Heart left ventricle (tissue), 16 donors: ENCODE measurements at regions of chr17 and their contacts with region 1.

Region 1: GRCh38 chr17:17919169-17920107 is 52.8 kb downstream of the TOM1L2 start:
- DNase-seq: peak; percentile 74 to 83 (median 75)
- ATAC-seq: peak; percentile 54 to 78 (median 60)
- H3K4me3 ChIP-seq: no peak overlapping the region
- H3K27ac ChIP-seq: peak overlapping the region in 6 of 12 donors; percentile 15 to 88 (median 34)
- H3K4me1 ChIP-seq: peaks cover 0 to 58% (median 42%) of the 10 kb centered on the region in 12 donors
- H3K27me3 ChIP-seq: no peaks in the 10 kb centered on the region
- CTCF ChIP-seq: peak; percentile 60 to 82 (median 73)
- POLR2A ChIP-seq: no peak

Region 2: GRCh38 chr17:17675925-17676534 is 243.4 kb before region 1 on chr17:
- intact Hi-C with region 1: loop called in 7 of 10 experiments (anchors 2 to 10 kb)
- DNase-seq: no peak
- ATAC-seq: no peak
- H3K4me3 ChIP-seq: no peak overlapping the region
- H3K27ac ChIP-seq: no peak overlapping the region
- H3K4me1 ChIP-seq: peaks cover 0 to 34% (median 13%) of the 10 kb centered on the region in 12 donors
- H3K27me3 ChIP-seq: no peaks in the 10 kb centered on the region
- CTCF ChIP-seq: no peak
- POLR2A ChIP-seq: no peak

Region 3: DNA sequence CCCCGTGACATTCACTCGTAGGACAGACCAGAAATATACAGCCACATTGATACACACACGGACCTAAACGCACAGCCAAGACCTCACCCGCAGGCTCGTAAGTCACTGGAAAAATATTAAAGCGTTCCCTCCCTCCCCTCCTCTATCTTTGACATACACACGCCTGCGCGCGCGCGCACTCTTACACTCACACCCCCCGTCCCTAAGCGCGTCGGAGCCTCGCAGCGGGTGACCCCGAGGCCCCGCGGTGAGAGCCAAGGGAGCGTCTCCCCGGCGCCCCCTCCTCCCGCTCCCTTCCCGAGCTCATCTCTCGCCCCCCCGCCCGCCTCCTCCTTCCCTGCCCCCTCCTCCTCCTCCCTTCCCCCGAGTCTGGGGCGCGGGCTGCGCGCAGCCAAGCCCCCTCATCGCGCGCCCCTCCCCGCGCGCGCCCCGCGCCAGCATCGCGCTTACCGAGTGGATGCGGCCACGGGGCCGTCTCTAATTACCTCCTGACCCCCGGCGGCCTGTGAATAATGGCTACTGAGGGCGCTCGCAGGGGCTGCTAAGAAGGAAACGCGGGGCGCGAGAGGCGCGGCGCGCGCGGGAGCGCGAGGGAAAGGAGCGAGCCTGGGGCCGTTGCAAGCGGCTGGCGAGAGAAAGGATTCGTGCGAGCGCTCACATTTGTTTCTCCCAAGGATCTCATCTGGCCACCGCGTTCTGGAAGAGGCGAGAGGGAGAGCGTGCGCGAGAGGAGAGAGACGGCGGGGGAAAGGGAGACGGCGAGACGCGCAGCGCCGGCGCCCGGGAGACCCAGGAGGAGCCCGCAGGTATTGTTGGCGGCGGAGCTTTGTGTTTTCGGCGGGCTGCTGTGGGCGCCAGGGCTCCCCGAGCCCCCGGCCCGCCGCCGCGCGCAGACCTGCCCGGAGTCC is 195.8 kb before region 1 on chr17:
- intact Hi-C with region 1: no loop called
- DNase-seq: no peak
- ATAC-seq: peak in 2 of 4 donors; percentile 7 to 37
- H3K4me3 ChIP-seq: peak overlapping the region; percentile 19 to 73 (median 55)
- H3K27ac ChIP-seq: peak overlapping the region in 7 of 12 donors; percentile 5 to 78 (median 53)
- H3K4me1 ChIP-seq: peaks cover 0 to 65% (median 34%) of the 10 kb centered on the region in 12 donors
- H3K27me3 ChIP-seq: peaks cover 0 to 16% (median 0%) of the 10 kb centered on the region in 9 donors
- CTCF ChIP-seq: no peak
- POLR2A ChIP-seq: no peak

Region 4: DNA sequence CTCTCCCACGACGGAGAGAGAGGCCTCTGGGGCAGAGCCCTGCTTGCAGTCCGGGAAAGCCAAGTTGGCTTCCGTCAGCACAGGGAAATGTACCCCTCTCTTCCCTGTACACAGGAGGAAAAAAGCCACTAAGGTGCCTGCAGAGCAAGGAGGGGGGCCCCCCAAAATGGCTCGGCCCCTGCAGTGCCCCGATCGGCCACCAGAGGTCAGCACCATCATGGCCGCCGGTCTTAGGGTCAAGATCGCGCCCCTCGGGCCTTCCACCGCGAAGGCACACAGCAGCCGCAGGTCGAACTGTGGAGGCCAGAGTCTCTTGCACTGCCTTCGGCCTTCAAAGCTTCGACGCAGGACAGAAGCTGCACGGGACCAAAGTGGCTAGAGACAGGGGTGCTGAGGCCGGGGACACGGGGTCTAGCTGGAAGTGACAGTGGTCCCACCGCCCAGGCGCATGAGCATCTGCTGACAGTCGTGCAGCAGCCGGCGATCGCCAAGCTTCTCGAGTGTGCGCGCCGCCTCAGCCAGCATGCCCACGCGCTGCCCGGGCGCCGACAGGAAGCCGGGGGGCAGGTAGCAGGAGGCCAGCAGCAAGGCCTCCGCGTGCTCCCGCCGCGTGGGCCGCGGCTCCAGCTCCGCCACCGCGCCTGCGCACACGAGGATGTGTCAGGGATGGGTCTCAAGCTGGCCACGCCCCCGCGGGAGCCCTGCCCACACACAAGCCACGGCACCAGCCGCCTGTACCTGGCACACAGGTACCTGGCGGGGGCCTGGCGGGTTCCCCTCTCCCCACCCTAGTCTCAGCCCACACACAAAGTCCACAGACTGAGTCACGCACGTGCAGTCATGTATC is 107.0 kb before region 1 on chr17:
- intact Hi-C with region 1: loop called (anchors 2 to 10 kb)
- DNase-seq: peak; percentile 74 to 89 (median 77)
- ATAC-seq: peak; percentile 21 to 46 (median 40)
- H3K4me3 ChIP-seq: no peak overlapping the region
- H3K27ac ChIP-seq: peak overlapping the region in 6 of 12 donors; percentile 3 to 71 (median 21)
- H3K4me1 ChIP-seq: peaks cover 9 to 82% (median 30%) of the 10 kb centered on the region in 12 donors
- H3K27me3 ChIP-seq: no peaks in the 10 kb centered on the region
- CTCF ChIP-seq: peak in 11 of 12 donors; percentile 99 to 100 (median 100)
- POLR2A ChIP-seq: no peak

Region 5: GRCh38 chr17:17859909-17860765 is 59.3 kb before region 1 on chr17:
- intact Hi-C with region 1: loop called in 3 of 10 experiments (anchors 2 to 10 kb)
- DNase-seq: peak; percentile 79 to 91 (median 85)
- ATAC-seq: peak; percentile 93 to 98 (median 96)
- H3K4me3 ChIP-seq: no peak overlapping the region
- H3K27ac ChIP-seq: peak overlapping the region in 8 of 12 donors; percentile 21 to 60 (median 47)
- H3K4me1 ChIP-seq: peaks cover 0 to 34% (median 15%) of the 10 kb centered on the region in 12 donors
- H3K27me3 ChIP-seq: no peaks in the 10 kb centered on the region
- CTCF ChIP-seq: peak; percentile 95 to 99 (median 98)
- POLR2A ChIP-seq: no peak

Region 6: GRCh38 chr17:17877529-17878358 is 41.7 kb before region 1 on chr17:
- intact Hi-C with region 1: loop called in 5 of 10 experiments (anchors 5 kb)
- DNase-seq: peak; percentile 84 to 92 (median 85)
- ATAC-seq: peak; percentile 86 to 88 (median 88)
- H3K4me3 ChIP-seq: peak overlapping the region in 2 of 12 donors; percentile 8 to 21
- H3K27ac ChIP-seq: peak overlapping the region; percentile 71 to 98 (median 90)
- H3K4me1 ChIP-seq: peaks cover 16 to 66% (median 50%) of the 10 kb centered on the region in 12 donors
- H3K27me3 ChIP-seq: no peaks in the 10 kb centered on the region
- CTCF ChIP-seq: peak in 4 of 12 donors; percentile 21 to 39 (median 24)
- POLR2A ChIP-seq: no peak

Region 7: DNA sequence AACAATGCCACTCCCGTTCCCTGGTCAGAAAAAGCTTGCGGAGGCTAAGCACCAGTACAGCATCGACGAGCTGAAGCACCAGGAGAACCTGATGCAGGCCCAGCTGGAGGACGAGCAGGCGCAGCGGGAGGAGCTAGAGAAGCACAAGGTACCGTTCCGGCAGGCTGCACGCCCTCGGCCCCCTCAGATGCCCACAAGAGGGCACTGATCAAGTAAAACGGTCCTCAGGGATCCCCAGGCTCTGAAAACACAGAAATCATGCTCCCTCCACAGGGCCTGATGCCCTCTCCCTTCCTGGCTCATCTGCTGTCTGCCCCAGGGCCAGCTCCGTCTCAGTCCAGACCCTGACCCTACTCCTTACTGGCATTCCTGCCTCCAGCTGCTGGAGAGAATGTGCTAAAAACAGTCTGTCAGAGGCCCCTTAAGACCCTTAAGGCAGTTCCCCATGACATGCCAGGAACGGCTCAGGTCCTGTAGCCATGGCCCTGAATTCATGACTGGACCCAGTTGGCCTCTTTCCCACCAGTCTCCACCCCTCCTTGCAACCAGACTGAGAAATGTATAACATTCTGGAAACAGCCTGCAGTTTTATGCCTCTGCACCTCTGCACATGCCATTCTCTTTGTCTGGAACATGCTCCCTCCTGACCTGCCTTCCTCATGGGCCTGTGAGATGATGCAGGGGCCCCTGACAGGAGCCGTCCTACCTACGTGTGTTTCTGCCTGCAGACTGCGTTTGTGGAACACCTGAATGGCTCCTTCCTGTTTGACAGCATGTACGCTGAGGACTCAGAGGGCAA is 75.0 kb after region 1 on chr17:
- intact Hi-C with region 1: no loop called
- DNase-seq: peak in 3 of 5 donors; percentile 32 to 62 (median 36)
- ATAC-seq: peak; percentile 55 to 83 (median 75)
- H3K4me3 ChIP-seq: no peak overlapping the region
- H3K27ac ChIP-seq: no peak overlapping the region
- H3K4me1 ChIP-seq: peaks cover 0 to 8% (median 0%) of the 10 kb centered on the region in 12 donors
- H3K27me3 ChIP-seq: no peaks in the 10 kb centered on the region
- CTCF ChIP-seq: peak in 11 of 12 donors; percentile 26 to 62 (median 46)
- POLR2A ChIP-seq: no peak

Region 8: GRCh38 chr17:18038861-18039534 is 119.6 kb after region 1 on chr17 and contains the starts of genes ATPAF2 and GID4:
- intact Hi-C with region 1: loop called in 2 of 10 experiments (anchors 10 kb)
- DNase-seq: peak; percentile 99 to 100 (median 100)
- ATAC-seq: peak; percentile 97 to 99 (median 97)
- H3K4me3 ChIP-seq: peak within 1 kb of the TSS; percentile 72 to 95 (median 88)
- H3K27ac ChIP-seq: peak within 1 kb of the TSS; percentile 68 to 89 (median 75)
- H3K4me1 ChIP-seq: peaks cover 0 to 57% (median 32%) of the 10 kb centered on the region in 12 donors
- H3K27me3 ChIP-seq: no peaks in the 10 kb centered on the region
- CTCF ChIP-seq: no peak
- POLR2A ChIP-seq: peak in 1 of 2 donors; percentile 47
- total RNA-seq, gene ATPAF2: 25.6 to 46.2 (median 37.6) TPM
- total RNA-seq, gene GID4: 15.3 to 27.7 (median 18.2) TPM

Region 9: GRCh38 chr17:18117982-18118975 is 198.8 kb after region 1 on chr17:
- intact Hi-C with region 1: no loop called
- DNase-seq: no peak
- ATAC-seq: no peak
- H3K4me3 ChIP-seq: no peak overlapping the region
- H3K27ac ChIP-seq: no peak overlapping the region
- H3K4me1 ChIP-seq: no peaks in the 10 kb centered on the region
- H3K27me3 ChIP-seq: peaks cover 0 to 8% (median 0%) of the 10 kb centered on the region in 9 donors
- CTCF ChIP-seq: no peak
- POLR2A ChIP-seq: no peak

Region 10: GRCh38 chr17:18141210-18141803 is 221.9 kb after region 1 on chr17:
- intact Hi-C with region 1: no loop called
- DNase-seq: peak in 1 of 5 donors; percentile 27
- ATAC-seq: peak in 2 of 4 donors; percentile 27 to 55
- H3K4me3 ChIP-seq: no peak overlapping the region
- H3K27ac ChIP-seq: no peak overlapping the region
- H3K4me1 ChIP-seq: peaks cover 0 to 7% (median 0%) of the 10 kb centered on the region in 12 donors
- H3K27me3 ChIP-seq: no peaks in the 10 kb centered on the region
- CTCF ChIP-seq: peak; percentile 49 to 81 (median 68)
- POLR2A ChIP-seq: no peak